Right ventricle myocardium inferior (tissue), 1 donor: ENCODE measurements at regions of chr17 and their contacts with region 1.

Region 1: DNA sequence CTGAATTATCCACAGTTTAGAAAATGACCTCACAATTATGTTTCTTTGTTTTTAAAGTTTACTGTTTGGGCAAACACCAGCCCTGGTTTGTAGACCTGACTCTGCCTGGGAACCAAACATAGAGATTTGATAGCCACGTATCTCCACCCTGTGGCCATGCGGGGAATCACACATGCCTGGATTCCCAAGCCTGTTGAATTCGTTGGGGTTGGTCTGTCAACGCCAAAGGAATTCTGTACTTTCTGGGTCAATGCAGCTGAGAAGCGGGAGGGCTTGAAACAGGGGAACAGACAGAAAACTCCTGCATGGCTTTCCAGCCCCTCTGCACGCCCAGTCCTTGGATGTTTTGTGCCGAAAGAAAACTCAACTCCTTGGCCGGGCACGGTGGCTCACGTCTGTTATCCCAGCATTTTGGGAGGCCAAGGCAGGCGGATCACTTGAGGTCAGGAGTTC is 27.0 kb downstream of the CD300A start:
- DNase-seq: peak; percentile 82
- ATAC-seq: peak; percentile 70

Region 2: GRCh38 chr17:74303305-74303704 is 190.1 kb before region 1 on chr17:
- intact Hi-C with region 1: loop called (anchors 5 kb)
- DNase-seq: peak; percentile 18
- ATAC-seq: no peak

Region 3: DNA sequence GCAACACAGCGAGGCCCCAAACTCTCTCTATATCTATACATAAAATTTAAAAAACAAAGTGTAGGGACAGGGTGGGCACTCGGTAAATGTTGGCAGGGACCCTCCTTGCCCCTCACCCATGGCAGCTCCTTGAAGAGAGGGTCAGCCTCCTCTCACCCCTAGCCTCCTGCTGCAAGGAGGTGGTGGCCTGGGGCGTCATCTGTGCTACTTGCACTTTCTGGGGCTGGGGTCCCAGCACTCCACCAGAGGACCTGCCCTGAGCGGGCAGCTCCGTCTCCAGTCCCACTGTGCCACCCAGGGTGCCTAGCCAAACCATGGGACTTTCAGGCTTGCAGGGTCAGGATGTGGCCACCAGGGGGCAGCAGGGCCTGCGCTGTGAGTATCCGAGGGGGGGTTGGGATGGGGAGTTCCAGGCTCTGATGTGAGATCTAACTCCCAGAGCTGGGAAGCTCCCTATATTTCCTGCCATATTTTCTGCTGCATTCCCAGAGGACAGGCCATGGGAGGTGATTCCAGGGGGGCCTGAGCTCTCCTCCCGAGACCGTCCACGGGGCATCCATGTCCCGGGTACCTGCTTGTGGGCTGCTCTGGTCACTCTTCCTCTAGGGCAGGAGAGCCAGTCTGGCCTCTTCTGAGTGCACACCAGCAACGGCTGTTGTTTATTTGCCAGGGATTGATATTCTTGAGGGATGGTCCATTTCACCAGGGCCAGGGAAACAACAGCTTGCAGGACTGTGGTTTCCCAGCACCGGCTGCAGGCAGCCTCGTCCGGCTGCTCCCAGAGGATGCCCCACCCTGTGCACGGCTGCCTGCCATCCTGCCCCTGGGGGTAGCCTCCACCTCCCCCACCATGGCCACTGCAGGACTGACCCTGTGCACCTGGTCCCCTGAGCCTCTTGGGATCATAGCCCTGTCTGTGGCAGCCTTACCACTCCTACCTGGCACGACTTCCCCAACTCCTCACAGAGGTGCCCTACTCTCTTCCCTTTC is 125.0 kb before region 1 on chr17:
- intact Hi-C with region 1: loop called (anchors 2 kb)
- DNase-seq: peak; percentile 89
- ATAC-seq: peak; percentile 57